Dorsolateral prefrontal cortex (tissue), 120 donors: ENCODE measurements at regions of chr12 and their contacts with region 1.

Region 1: DNA sequence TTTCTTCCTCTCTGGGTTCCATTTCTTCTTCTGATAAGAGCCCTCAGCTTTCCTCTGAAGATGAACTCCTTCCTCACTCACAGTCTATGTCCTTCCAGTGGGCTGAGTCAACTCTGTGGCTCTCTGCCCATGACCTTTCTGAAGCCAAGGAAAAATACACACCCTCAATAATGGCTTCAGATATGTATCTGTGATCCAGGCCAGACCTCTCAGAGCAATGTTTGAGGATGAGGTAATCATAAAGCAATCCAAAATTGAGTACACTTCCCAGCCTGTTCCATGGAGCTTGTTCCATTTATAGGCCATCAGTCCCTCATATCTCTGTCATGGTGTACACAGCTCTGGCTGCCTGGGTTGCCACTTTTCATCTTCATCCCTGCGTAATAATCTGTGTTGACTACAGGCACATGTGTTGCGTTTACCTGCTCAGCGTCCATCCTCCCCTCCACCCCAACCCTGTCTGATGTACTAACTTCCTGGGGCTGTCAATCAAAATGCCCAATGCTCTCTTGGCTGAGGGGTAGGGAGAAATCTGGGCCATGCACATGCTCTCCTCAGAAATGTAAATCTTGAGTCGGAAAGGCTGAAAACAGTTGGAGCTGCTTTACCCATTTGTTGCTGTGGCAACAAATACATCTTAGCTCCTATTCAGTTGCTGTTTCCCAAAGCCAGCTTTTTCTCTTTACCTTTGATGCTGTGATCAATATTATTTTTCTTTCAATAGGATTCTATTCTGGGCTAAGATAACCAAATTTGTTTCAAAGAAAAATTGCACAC is 377.8 kb upstream of the TMEM132C start:
- DNase-seq: no peak
- H3K4me3 ChIP-seq: no peak overlapping the region
- H3K27ac ChIP-seq: peak overlapping the region in 47 of 59 donors; percentile 0 to 79 (median 49)
- H3K27me3 ChIP-seq: no peaks in the 10 kb centered on the region
- CTCF ChIP-seq: no peak

Region 2: DNA sequence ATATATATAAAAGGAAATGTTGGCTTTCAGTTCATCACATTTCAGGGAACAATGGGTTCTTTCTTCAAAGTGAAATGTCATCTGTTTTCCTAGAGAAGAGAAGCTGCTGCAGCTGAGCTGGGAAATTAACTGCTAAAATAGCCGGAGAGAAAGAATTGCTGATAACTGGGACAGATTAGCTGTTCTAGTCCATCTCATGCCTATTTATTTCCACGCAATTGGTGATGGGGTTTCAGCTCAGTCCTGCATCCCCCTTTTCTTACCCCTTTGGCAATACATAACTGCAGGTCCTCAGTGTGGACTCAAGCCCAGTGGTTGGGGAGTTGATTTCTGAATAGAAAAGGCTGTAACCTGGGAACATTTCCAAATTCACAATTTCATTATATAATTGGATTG is 59.1 kb before region 1 on chr12:
- intact Hi-C with region 1: loop called in 1 of 2 experiments (anchors 10 kb)
- DNase-seq: no peak
- H3K4me3 ChIP-seq: peak overlapping the region in 3 of 59 donors; percentile 9 to 31 (median 20)
- H3K27ac ChIP-seq: peak overlapping the region in 56 of 59 donors; percentile 1 to 89 (median 74)
- H3K27me3 ChIP-seq: no peaks in the 10 kb centered on the region
- CTCF ChIP-seq: peak in 1 of 56 donors; percentile 12